ENCODE measurements at regions of chrX and their contacts with region 1.

Region 1: GRCh38 chrX:133868682-133869081 is 116.7 kb downstream of the GPC3 start:
- DNase-seq: no peak

Region 2: GRCh38 chrX:133715715-133716114 is 153.0 kb before region 1 on chrX:
- CTCF ChIA-PET with region 1: no interaction called
- POLR2A ChIA-PET with region 1: no interaction called
- DNase-seq: no peak

Region 3: GRCh38 chrX:134013092-134013497 is 144.4 kb after region 1 on chrX:
- CTCF ChIA-PET with region 1: interaction called, 10 read pairs
- POLR2A ChIA-PET with region 1: no interaction called
- DNase-seq: no peak